Mammary epithelial cell (primary cell): ENCODE measurements at regions of chr2 and their contacts with region 1.

Region 1: GRCh38 chr2:180240774-180241173 is 233.7 kb upstream of the CWC22 start:
- DNase-seq: peak; percentile 27
- H3K4me3 ChIP-seq: no peak overlapping the region
- H3K27ac ChIP-seq: no peak overlapping the region
- H3K4me1 ChIP-seq: no peaks in the 10 kb centered on the region
- H3K27me3 ChIP-seq: no peaks in the 10 kb centered on the region
- CTCF ChIP-seq: peak; percentile 40 to 62

Region 2: DNA sequence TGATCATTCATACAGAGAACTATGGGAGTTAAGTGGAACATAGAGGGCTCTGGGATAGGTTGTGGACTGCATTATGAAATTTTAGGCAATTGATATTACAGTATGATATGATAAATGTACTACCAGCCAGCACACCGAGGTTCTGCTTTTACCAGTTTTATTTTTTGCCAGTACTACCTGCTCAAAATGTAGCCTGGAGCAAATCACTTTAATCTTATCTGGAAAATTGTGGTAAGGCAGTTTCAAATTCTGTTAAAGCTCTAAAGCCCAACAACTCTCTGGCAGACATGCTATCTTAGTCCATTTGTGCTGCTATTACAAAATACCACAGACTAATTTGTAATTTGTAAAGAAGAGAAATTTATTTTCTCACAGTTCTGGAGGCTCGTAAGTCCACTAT is 241.2 kb after region 1 on chr2:
- CTCF ChIA-PET with region 1: no interaction called
- dilution Hi-C with region 1: no loop called
- in situ Hi-C with region 1: no loop called
- intact Hi-C with region 1: loop called (anchors 1 kb)
- DNase-seq: no peak
- H3K4me3 ChIP-seq: no peak overlapping the region
- H3K27ac ChIP-seq: no peak overlapping the region
- H3K4me1 ChIP-seq: no peaks in the 10 kb centered on the region
- H3K27me3 ChIP-seq: no peaks in the 10 kb centered on the region
- CTCF ChIP-seq: no peak

Region 3: GRCh38 chr2:180604077-180604476 is 363.3 kb after region 1 on chr2:
- CTCF ChIA-PET with region 1: no interaction called
- dilution Hi-C with region 1: no loop called
- in situ Hi-C with region 1: no loop called
- intact Hi-C with region 1: loop called (anchors 1 kb)
- DNase-seq: peak; percentile 8
- H3K4me3 ChIP-seq: no peak overlapping the region
- H3K27ac ChIP-seq: no peak overlapping the region
- H3K4me1 ChIP-seq: no peaks in the 10 kb centered on the region
- H3K27me3 ChIP-seq: no peaks in the 10 kb centered on the region
- CTCF ChIP-seq: peak; percentile 56 to 57

Region 4: GRCh38 chr2:181058378-181059269 is 817.9 kb after region 1 on chr2:
- CTCF ChIA-PET with region 1: interaction called, 8 read pairs
- dilution Hi-C with region 1: no loop called
- in situ Hi-C with region 1: loop called in 1 of 2 experiments (anchors 25 kb)
- intact Hi-C with region 1: loop called (anchors 1 kb)
- DNase-seq: peak; percentile 31
- H3K4me3 ChIP-seq: no peak overlapping the region
- H3K27ac ChIP-seq: no peak overlapping the region
- H3K4me1 ChIP-seq: peaks cover 7% of the 10 kb centered on the region
- H3K27me3 ChIP-seq: no peaks in the 10 kb centered on the region
- CTCF ChIP-seq: peak; percentile 70 to 74

Region 5: DNA sequence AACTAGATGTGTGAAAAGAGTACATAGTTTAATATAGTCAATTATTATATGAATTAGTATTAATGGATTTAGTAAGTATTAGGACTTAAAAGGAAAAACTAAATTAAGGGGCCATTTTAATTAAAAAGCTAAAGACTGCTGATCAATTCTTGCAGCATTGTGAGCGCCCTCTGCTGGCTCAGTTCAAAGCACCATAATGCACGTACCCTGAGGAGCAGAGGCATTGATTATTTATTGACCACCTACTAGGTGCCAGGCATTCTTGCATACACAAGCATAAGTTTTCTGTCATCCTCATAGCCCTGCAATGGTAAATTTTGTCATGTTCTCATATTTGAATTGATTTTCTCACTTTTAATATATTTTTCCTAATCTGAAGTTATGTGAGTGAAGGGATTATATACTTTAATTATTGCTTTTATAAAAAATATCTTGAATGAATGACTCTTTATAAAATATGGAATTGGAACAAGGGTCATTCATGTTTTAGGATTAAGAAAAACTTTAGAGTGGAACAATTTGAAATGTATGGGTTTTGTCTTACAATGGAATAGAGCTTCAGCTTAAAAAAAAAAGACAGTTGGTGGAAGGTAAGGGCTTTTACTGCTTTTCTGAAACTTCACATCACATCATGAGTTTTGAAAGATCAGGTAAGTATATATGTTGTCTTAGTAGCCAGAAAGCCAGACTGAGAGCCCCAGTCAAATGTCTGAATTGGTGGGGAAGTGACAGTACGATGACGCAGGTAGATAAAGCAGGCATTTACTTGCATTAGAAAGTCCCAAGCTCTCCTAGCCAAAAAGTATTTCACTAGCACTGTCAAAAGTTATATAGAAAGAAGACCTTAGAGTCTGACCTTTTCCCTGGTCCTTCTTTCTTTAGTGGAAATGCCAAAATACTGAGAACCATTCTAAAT is 1226.1 kb after region 1 on chr2:
- CTCF ChIA-PET with region 1: no interaction called
- dilution Hi-C with region 1: no loop called
- in situ Hi-C with region 1: no loop called
- intact Hi-C with region 1: loop called (anchors 5 kb)
- DNase-seq: peak; percentile 25
- H3K4me3 ChIP-seq: no peak overlapping the region
- H3K27ac ChIP-seq: peak overlapping the region; percentile 66
- H3K4me1 ChIP-seq: peaks cover 10% of the 10 kb centered on the region
- H3K27me3 ChIP-seq: no peaks in the 10 kb centered on the region
- CTCF ChIP-seq: peak; percentile 84 to 85